ENCODE measurements at regions of chr4 and their contacts with region 1.

Region 1: GRCh38 chr4:112636688-112637551 is at the starts of genes LARP7 and ZGRF1:
- DNase-seq: peak; percentile 99
- H3K4me3 ChIP-seq: peak within 1 kb of the TSS; percentile 43 to 72
- H3K27ac ChIP-seq: peak within 1 kb of the TSS; percentile 94 to 98
- H3K4me1 ChIP-seq: peaks cover 7% of the 10 kb centered on the region
- H3K27me3 ChIP-seq: no peaks in the 10 kb centered on the region
- CTCF ChIP-seq: peak; percentile 91 to 99 (median 97)
- POLR2A ChIP-seq: peak; percentile 15
- total RNA-seq, gene LARP7: 26.6 to 35.4 TPM
- total RNA-seq, gene ZGRF1: 2.9 to 8.9 TPM

Region 2: GRCh38 chr4:112765317-112765975 is 128.5 kb after region 1 on chr4:
- intact Hi-C with region 1: loop called (anchors 5 kb)
- DNase-seq: no peak
- H3K4me3 ChIP-seq: no peak overlapping the region
- H3K27ac ChIP-seq: no peak overlapping the region
- H3K4me1 ChIP-seq: no peaks in the 10 kb centered on the region
- H3K27me3 ChIP-seq: no peaks in the 10 kb centered on the region
- CTCF ChIP-seq: peak in 1 of 4 experiments; percentile 10
- POLR2A ChIP-seq: no peak

Region 3: GRCh38 chr4:112927544-112927943 is 290.6 kb after region 1 on chr4:
- intact Hi-C with region 1: loop called (anchors 5 kb)
- DNase-seq: no peak
- H3K4me3 ChIP-seq: no peak overlapping the region
- H3K27ac ChIP-seq: no peak overlapping the region
- H3K4me1 ChIP-seq: no peaks in the 10 kb centered on the region
- H3K27me3 ChIP-seq: no peaks in the 10 kb centered on the region
- CTCF ChIP-seq: no peak
- POLR2A ChIP-seq: no peak

Region 4: DNA sequence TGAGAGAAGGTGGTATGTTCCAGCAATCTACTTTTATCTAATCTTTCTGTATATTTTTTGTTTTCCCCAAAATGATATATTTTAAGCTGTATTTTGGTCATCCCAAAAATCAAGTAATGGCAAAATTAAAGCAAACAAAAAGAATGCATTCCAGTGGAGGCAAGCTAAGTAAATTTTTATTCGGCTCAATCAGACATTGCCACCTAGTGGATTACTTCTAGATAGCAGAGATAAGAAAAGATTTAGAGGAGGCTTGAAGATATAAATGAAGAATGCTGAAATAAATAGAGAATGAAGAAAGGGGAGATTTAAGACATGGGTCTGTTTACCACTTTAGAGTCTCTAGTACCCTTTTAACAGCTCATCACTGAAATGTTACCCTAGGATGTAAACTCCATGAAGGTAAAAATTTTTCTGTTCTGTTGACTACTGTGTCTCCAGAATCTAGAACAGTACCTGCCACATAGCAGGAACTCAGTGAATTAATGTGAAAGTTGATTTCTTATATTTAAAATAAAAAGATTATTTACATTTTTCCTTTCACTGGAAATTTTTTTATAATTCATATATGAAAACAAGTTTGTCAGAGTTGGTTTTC is 301.6 kb after region 1 on chr4:
- intact Hi-C with region 1: loop called (anchors 5 kb)
- DNase-seq: no peak
- H3K4me3 ChIP-seq: no peak overlapping the region
- H3K27ac ChIP-seq: no peak overlapping the region
- H3K4me1 ChIP-seq: no peaks in the 10 kb centered on the region
- H3K27me3 ChIP-seq: no peaks in the 10 kb centered on the region
- CTCF ChIP-seq: peak in 3 of 4 experiments; percentile 46 to 64 (median 58)
- POLR2A ChIP-seq: no peak

Measured in prostate gland (tissue), 2 donors.